A673 (cell line): ENCODE measurements at regions of chr3 and their contacts with region 1.

Region 1: GRCh38 chr3:8301728-8302462 is 199.7 kb upstream of the LMCD1 start:
- DNase-seq: peak; percentile 92
- H3K4me3 ChIP-seq: no peak overlapping the region
- H3K27ac ChIP-seq: peak overlapping the region; percentile 82
- H3K4me1 ChIP-seq: peaks cover 74% of the 10 kb centered on the region
- H3K27me3 ChIP-seq: no peaks in the 10 kb centered on the region
- CTCF ChIP-seq: peak; percentile 88

Region 2: GRCh38 chr3:7800006-7800780 is 501.7 kb before region 1 on chr3:
- CTCF ChIA-PET with region 1: no interaction called
- POLR2A ChIA-PET with region 1: interaction called, 4 read pairs
- intact Hi-C with region 1: loop called (anchors 2 kb)
- DNase-seq: peak; percentile 52
- H3K4me3 ChIP-seq: no peak overlapping the region
- H3K27ac ChIP-seq: no peak overlapping the region
- H3K4me1 ChIP-seq: no peaks in the 10 kb centered on the region
- H3K27me3 ChIP-seq: no peaks in the 10 kb centered on the region
- CTCF ChIP-seq: peak; percentile 61

Region 3: GRCh38 chr3:7876741-7877297 is 425.1 kb before region 1 on chr3:
- CTCF ChIA-PET with region 1: no interaction called
- POLR2A ChIA-PET with region 1: no interaction called
- intact Hi-C with region 1: loop called (anchors 10 kb)
- DNase-seq: peak; percentile 84
- H3K4me3 ChIP-seq: no peak overlapping the region
- H3K27ac ChIP-seq: no peak overlapping the region
- H3K4me1 ChIP-seq: peaks cover 12% of the 10 kb centered on the region
- H3K27me3 ChIP-seq: peaks cover 18% of the 10 kb centered on the region
- CTCF ChIP-seq: no peak

Region 4: GRCh38 chr3:8111069-8111798 is 190.7 kb before region 1 on chr3:
- CTCF ChIA-PET with region 1: interaction called, 4 read pairs
- POLR2A ChIA-PET with region 1: no interaction called
- intact Hi-C with region 1: loop called (anchors 1 kb)
- DNase-seq: peak; percentile 92
- H3K4me3 ChIP-seq: no peak overlapping the region
- H3K27ac ChIP-seq: no peak overlapping the region
- H3K4me1 ChIP-seq: peaks cover 10% of the 10 kb centered on the region
- H3K27me3 ChIP-seq: no peaks in the 10 kb centered on the region
- CTCF ChIP-seq: peak; percentile 88

Region 5: GRCh38 chr3:8152821-8153418 is 149.0 kb before region 1 on chr3:
- CTCF ChIA-PET with region 1: interaction called, 3 read pairs
- POLR2A ChIA-PET with region 1: no interaction called
- intact Hi-C with region 1: loop called (anchors 5 kb)
- DNase-seq: peak; percentile 96
- H3K4me3 ChIP-seq: no peak overlapping the region
- H3K27ac ChIP-seq: peak overlapping the region; percentile 70
- H3K4me1 ChIP-seq: peaks cover 34% of the 10 kb centered on the region
- H3K27me3 ChIP-seq: no peaks in the 10 kb centered on the region
- CTCF ChIP-seq: peak; percentile 60

Region 6: GRCh38 chr3:8254489-8254888 is 47.4 kb before region 1 on chr3:
- CTCF ChIA-PET with region 1: interaction called, 5 read pairs
- POLR2A ChIA-PET with region 1: interaction called, 13 read pairs
- intact Hi-C with region 1: loop called (anchors 1 kb)
- DNase-seq: no peak
- H3K4me3 ChIP-seq: no peak overlapping the region
- H3K27ac ChIP-seq: peak overlapping the region; percentile 96
- H3K4me1 ChIP-seq: peaks cover 53% of the 10 kb centered on the region
- H3K27me3 ChIP-seq: no peaks in the 10 kb centered on the region
- CTCF ChIP-seq: no peak

Region 7: GRCh38 chr3:8405144-8405543 is 103.2 kb after region 1 on chr3:
- CTCF ChIA-PET with region 1: no interaction called
- POLR2A ChIA-PET with region 1: no interaction called
- intact Hi-C with region 1: no loop called
- DNase-seq: no peak
- H3K4me3 ChIP-seq: no peak overlapping the region
- H3K27ac ChIP-seq: no peak overlapping the region
- H3K4me1 ChIP-seq: no peaks in the 10 kb centered on the region
- H3K27me3 ChIP-seq: no peaks in the 10 kb centered on the region
- CTCF ChIP-seq: no peak